Caco-2 (cell line): ENCODE measurements at regions of chr14 and their contacts with region 1.

Region 1: GRCh38 chr14:96445844-96446710 is 54.1 kb downstream of the AK7 start:
- DNase-seq: peak; percentile 68 to 79
- H3K4me3 ChIP-seq: peak overlapping the region; percentile 15; the same call in 1 of the 2 replicates
- H3K4me3 Mint-ChIP-seq: peak overlapping the region; percentile 70
- H3K27ac Mint-ChIP-seq: peak overlapping the region; percentile 74
- H3K4me1 ChIP-seq: peaks cover 30% of the 10 kb centered on the region
- H3K4me1 Mint-ChIP-seq: peaks cover 10% of the 10 kb centered on the region
- H3K27me3 ChIP-seq: no peaks in the 10 kb centered on the region
- H3K27me3 Mint-ChIP-seq: no peaks in the 10 kb centered on the region
- CTCF ChIP-seq: no peak

Region 2: DNA sequence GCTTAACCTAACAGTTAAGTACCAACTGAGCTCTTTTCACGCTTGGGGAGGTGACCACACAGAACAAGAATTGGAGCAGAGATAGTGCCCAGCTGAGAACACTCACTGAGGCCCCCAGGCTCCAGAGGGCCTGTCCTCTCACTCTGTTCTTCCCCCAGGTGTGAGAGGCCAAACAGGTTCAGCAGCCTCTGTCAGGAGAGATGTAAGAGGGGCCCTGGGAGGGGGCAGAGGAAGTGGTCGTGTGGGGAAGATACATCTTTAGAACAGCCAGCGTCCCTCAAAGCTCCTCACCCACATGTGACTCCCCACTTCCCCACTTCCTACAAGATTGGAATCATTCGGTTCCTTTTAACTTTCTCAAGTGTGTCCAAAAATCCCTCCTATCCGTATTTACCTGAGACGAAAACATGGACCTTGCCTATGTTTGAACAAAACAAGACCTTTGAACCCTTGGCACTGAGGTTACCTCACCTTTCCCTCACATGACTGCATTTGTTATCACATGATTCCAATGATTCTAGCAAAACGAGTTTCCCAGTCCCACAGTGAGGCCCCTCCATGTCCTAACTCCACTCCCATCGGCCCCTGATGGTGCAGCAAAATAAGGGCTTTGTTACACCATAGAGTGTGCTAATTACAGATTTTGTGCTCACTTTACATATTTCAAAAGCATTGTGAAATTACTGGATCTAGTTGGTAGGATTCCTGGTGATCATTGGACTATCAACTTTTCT is 16.0 kb after region 1 on chr14:
- CTCF ChIA-PET with region 1: no interaction called
- POLR2A ChIA-PET with region 1: interaction called, 6 read pairs
- intact Hi-C with region 1: loop called (anchors 1 kb)
- DNase-seq: peak; percentile 94 to 97
- H3K4me3 ChIP-seq: 0 out of 2 replicates have a peak overlapping the region, but pooled peaks have one; percentile 8
- H3K4me3 Mint-ChIP-seq: peak overlapping the region; percentile 76
- H3K27ac Mint-ChIP-seq: peak overlapping the region; percentile 94
- H3K4me1 ChIP-seq: peaks cover 49% of the 10 kb centered on the region
- H3K4me1 Mint-ChIP-seq: peaks cover 23% of the 10 kb centered on the region
- H3K27me3 ChIP-seq: no peaks in the 10 kb centered on the region
- H3K27me3 Mint-ChIP-seq: no peaks in the 10 kb centered on the region
- CTCF ChIP-seq: no peak

Region 3: GRCh38 chr14:96554315-96554910 is 108.3 kb after region 1 on chr14:
- CTCF ChIA-PET with region 1: no interaction called
- POLR2A ChIA-PET with region 1: no interaction called
- intact Hi-C with region 1: no loop called
- DNase-seq: no peak
- H3K4me3 ChIP-seq: no peak overlapping the region
- H3K4me3 Mint-ChIP-seq: no peak overlapping the region
- H3K27ac Mint-ChIP-seq: no peak overlapping the region
- H3K4me1 ChIP-seq: no peaks in the 10 kb centered on the region
- H3K4me1 Mint-ChIP-seq: no peaks in the 10 kb centered on the region
- H3K27me3 ChIP-seq: no peaks in the 10 kb centered on the region
- H3K27me3 Mint-ChIP-seq: no peaks in the 10 kb centered on the region
- CTCF ChIP-seq: no peak